ENCODE measurements at regions of chr19 and their contacts with region 1.

Region 1: GRCh38 chr19:33430674-33431277 is 57.3 kb downstream of the CEBPG start:
- DNase-seq: peak; percentile 78
- H3K4me3 Mint-ChIP-seq: no peak overlapping the region
- H3K27ac Mint-ChIP-seq: peak overlapping the region; percentile 33
- H3K4me1 Mint-ChIP-seq: peaks cover 7% of the 10 kb centered on the region
- H3K27me3 Mint-ChIP-seq: peaks cover 7% of the 10 kb centered on the region

Region 2: DNA sequence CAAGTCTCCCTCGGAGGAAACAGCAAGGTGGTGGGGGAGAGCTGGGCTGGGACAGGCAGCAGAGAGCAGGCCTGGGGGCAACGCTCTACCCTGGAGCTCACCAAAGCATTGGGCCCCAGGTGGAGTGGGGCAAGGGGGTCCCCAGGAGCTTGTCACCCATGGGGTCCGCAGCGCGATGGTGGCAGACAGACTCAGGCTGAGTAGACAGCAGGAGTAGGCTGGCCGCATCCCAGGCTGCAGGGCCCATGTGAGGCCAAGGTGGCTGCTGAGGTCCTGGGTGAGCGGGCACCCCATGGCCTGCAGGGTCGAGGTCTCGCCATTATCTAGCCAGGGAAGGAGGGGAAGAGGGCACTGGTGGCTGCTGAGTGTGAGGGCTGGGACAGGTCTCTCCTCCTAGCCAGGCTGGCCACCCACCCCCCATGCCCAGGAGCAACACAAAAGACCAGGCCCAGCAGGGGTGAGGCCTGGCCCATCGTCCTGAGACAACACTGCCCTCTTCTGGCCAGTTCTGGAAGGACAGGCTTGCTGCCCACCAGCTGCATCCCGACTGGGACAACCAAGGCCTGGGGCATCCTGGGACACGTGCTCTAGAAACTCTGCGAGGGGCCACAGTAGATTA is 24.1 kb before region 1 on chr19:
- CTCF ChIA-PET with region 1: no interaction called
- DNase-seq: peak; percentile 82
- H3K4me3 Mint-ChIP-seq: no peak overlapping the region
- H3K27ac Mint-ChIP-seq: no peak overlapping the region
- H3K4me1 Mint-ChIP-seq: no peaks in the 10 kb centered on the region
- H3K27me3 Mint-ChIP-seq: no peaks in the 10 kb centered on the region

Region 3: GRCh38 chr19:33508941-33509614 is 78.3 kb after region 1 on chr19:
- CTCF ChIA-PET with region 1: no interaction called
- DNase-seq: no peak
- H3K4me3 Mint-ChIP-seq: no peak overlapping the region
- H3K27ac Mint-ChIP-seq: no peak overlapping the region
- H3K4me1 Mint-ChIP-seq: peaks cover under 1% of the 10 kb centered on the region
- H3K27me3 Mint-ChIP-seq: no peaks in the 10 kb centered on the region

Region 4: DNA sequence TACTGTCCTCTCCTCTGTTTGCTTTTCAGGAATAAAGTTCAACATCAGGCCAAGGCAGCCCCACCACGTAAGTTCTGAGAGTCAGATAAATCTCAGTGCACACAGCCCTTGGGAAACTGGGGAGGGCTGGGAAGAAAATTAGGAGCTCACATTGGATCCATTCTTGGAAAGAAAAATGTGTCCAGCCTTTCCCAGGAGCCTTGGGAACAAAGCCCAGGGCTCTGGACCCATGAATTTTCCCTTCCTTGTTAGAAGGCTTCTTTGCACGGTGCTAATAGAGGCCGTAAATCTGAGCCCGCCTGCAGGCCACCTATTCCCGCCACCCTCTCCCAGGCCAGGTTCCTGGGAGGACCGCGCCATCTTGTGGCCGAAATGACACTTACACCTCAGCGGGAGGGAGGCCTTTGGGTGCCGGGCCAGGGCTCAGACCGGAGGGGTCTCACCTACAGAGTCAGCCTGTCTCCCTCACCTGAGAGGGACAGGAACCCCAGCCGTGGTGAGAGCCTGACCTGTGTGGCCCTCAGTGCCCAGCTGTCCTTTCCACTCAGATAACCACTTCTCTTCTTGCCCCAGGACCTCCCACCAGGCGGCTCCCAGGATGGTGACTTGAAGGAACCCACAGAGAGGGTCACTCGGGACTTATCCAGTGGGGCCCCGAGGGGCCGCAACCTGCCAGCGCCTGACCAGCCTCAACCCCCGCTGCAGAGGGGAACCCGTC is 340.8 kb after region 1 on chr19:
- CTCF ChIA-PET with region 1: interaction called, 19 read pairs
- DNase-seq: peak; percentile 79
- H3K4me3 Mint-ChIP-seq: no peak overlapping the region
- H3K27ac Mint-ChIP-seq: no peak overlapping the region
- H3K4me1 Mint-ChIP-seq: no peaks in the 10 kb centered on the region
- H3K27me3 Mint-ChIP-seq: no peaks in the 10 kb centered on the region

Measured in activated naive CD4-positive, alpha-beta T cell treated with anti-CD3 and anti-CD28 coated beads, Interleukin-2, amount 10 ng/mL, durations not matched to agents 7 days and 5 days (primary cell).